ENCODE measurements at regions of chr16 and their contacts with region 1.

Region 1: GRCh38 chr16:30096105-30096861 is at the start of gene YPEL3:
- DNase-seq: peak; percentile 94 to 97
- H3K4me3 ChIP-seq: peak within 1 kb of the TSS; percentile 82 to 90
- H3K27ac ChIP-seq: peak within 1 kb of the TSS; percentile 94 to 98
- H3K4me1 ChIP-seq: peaks cover 0 to 45% (median 32%) of the 10 kb centered on the region in 4 donors
- H3K27me3 ChIP-seq: no peaks in the 10 kb centered on the region
- CTCF ChIP-seq: no peak

Region 2: DNA sequence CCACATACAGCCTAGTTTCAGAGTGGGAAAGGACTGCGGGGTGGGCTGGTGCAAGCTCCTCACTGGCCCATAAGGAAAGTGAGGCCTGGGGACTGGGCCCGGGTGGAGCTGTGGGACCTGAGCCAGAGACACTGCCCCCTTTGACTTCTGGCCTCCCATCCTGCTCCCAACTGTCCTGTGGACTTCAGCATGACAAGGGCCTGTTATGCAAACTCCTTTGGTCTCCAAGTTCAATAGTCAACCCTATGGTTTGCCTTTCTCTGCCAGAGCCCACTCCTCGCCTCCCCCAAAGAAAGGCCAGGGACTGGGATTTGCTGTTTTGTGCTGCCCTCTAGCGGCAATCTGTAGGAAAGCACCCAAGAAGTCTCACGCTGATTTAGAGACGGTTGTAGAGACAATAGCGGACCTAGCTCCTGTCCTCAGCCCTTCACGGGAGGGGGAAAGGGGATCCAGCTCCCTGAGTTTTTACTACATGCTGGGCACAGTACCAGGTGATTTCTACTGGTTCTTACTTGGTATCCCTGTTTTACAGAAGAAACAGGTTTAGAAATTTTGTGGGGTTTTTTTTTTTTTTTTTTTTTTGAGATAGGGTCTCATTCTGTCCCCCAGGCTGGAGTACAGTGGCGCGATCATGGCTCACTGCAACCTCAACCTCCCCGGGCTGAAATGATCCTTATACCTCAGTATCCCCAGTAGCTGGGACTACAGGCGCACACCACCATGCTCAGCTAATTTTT is 64.0 kb before region 1 on chr16:
- intact Hi-C with region 1: no loop called
- DNase-seq: no peak
- H3K4me3 ChIP-seq: no peak overlapping the region
- H3K27ac ChIP-seq: no peak overlapping the region
- H3K4me1 ChIP-seq: peaks cover 0 to 17% (median 10%) of the 10 kb centered on the region in 4 donors
- H3K27me3 ChIP-seq: peaks cover 0 to 91% of the 10 kb centered on the region in 2 donors
- CTCF ChIP-seq: peak; percentile 53 to 61

Region 3: GRCh38 chr16:30122604-30123160 is 26.4 kb after region 1 on chr16:
- intact Hi-C with region 1: loop called (anchors 1 kb)
- DNase-seq: peak in 1 of 2 donors; percentile 76
- H3K4me3 ChIP-seq: peak overlapping the region; percentile 91 to 95
- H3K27ac ChIP-seq: peak overlapping the region; percentile 95 to 97
- H3K4me1 ChIP-seq: peaks cover 0 to 31% (median 16%) of the 10 kb centered on the region in 4 donors
- H3K27me3 ChIP-seq: no peaks in the 10 kb centered on the region
- CTCF ChIP-seq: no peak

Measured in tibial artery (tissue), 4 donors.